Prostate gland (tissue), 2 donors: ENCODE measurements at regions of chr11 and their contacts with region 1.

Region 1: GRCh38 chr11:69642913-69643632 is 2.1 kb downstream of the CCND1 start:
- DNase-seq: peak; percentile 76
- H3K4me3 ChIP-seq: peak overlapping the region; percentile 87 to 99
- H3K27ac ChIP-seq: peak overlapping the region; percentile 91 to 93
- H3K4me1 ChIP-seq: peaks cover 38% of the 10 kb centered on the region
- H3K27me3 ChIP-seq: no peaks in the 10 kb centered on the region
- CTCF ChIP-seq: peak; percentile 96 to 98 (median 97)
- POLR2A ChIP-seq: peak; percentile 42

Region 2: GRCh38 chr11:68927280-68928135 is 715.6 kb before region 1 on chr11:
- intact Hi-C with region 1: loop called (anchors 10 kb)
- DNase-seq: peak; percentile 31
- H3K4me3 ChIP-seq: no peak overlapping the region
- H3K27ac ChIP-seq: peak overlapping the region; percentile 18 to 54
- H3K4me1 ChIP-seq: peaks cover 7% of the 10 kb centered on the region
- H3K27me3 ChIP-seq: no peaks in the 10 kb centered on the region
- CTCF ChIP-seq: no peak
- POLR2A ChIP-seq: no peak

Region 3: GRCh38 chr11:69101115-69101791 is 541.8 kb before region 1 on chr11:
- intact Hi-C with region 1: loop called (anchors 1 kb)
- DNase-seq: peak; percentile 87
- H3K4me3 ChIP-seq: no peak overlapping the region
- H3K27ac ChIP-seq: no peak overlapping the region
- H3K4me1 ChIP-seq: peaks cover 16% of the 10 kb centered on the region
- H3K27me3 ChIP-seq: no peaks in the 10 kb centered on the region
- CTCF ChIP-seq: peak; percentile 96 to 100 (median 99)
- POLR2A ChIP-seq: no peak

Region 4: DNA sequence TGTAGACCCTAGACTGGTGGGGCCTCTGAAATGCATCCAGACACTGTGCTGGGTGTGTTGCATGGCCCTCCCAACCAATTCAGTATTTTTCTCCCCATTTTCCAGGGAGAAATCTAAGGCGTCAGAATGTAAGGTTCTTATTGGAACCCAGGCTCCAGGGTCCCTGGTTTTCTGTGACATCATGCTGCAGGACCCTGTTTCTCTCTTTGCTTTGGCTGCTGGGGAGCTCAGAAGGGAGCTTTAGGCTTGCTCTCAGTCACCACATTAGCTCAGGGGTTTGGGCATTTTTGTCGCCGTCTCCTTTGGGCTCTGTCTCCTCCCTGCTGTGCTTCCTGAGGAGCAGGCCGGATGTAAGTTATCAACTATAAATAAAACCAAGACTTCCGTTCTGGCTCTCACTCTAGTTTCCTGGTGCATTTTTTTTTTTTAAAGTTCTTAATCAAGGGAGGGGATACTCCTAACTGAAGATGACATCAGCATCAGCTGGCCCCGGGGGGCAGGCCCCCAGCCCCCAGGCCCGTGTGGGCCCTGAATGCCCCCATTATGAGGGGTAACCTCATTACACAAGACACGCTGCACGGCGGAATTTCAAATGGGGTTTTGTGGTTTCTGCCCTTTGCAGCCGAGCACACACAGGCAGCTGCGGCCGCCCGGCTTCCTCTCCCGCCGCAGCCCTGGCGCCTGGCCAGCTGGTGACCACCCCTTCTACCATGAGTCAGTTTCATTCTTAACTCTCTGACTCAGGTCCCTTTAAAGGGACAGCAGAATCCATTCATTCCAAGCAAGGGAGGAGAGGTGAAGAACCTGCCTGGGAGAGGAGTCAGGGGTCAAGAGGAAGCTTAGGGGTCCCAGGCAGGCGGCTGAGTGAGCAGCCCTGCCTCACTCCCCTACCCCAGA is 345.9 kb before region 1 on chr11:
- intact Hi-C with region 1: loop called (anchors 2 kb)
- DNase-seq: peak; percentile 64
- H3K4me3 ChIP-seq: peak overlapping the region in 1 of 2 donors; percentile 8
- H3K27ac ChIP-seq: peak overlapping the region; percentile 13 to 30
- H3K4me1 ChIP-seq: no peaks in the 10 kb centered on the region
- H3K27me3 ChIP-seq: no peaks in the 10 kb centered on the region
- CTCF ChIP-seq: no peak
- POLR2A ChIP-seq: no peak

Region 5: GRCh38 chr11:69497221-69497787 is 145.8 kb before region 1 on chr11:
- intact Hi-C with region 1: loop called (anchors 10 kb)
- DNase-seq: peak; percentile 35
- H3K4me3 ChIP-seq: no peak overlapping the region
- H3K27ac ChIP-seq: peak overlapping the region; percentile 49 to 53
- H3K4me1 ChIP-seq: peaks cover 3% of the 10 kb centered on the region
- H3K27me3 ChIP-seq: no peaks in the 10 kb centered on the region
- CTCF ChIP-seq: no peak
- POLR2A ChIP-seq: no peak

Region 6: DNA sequence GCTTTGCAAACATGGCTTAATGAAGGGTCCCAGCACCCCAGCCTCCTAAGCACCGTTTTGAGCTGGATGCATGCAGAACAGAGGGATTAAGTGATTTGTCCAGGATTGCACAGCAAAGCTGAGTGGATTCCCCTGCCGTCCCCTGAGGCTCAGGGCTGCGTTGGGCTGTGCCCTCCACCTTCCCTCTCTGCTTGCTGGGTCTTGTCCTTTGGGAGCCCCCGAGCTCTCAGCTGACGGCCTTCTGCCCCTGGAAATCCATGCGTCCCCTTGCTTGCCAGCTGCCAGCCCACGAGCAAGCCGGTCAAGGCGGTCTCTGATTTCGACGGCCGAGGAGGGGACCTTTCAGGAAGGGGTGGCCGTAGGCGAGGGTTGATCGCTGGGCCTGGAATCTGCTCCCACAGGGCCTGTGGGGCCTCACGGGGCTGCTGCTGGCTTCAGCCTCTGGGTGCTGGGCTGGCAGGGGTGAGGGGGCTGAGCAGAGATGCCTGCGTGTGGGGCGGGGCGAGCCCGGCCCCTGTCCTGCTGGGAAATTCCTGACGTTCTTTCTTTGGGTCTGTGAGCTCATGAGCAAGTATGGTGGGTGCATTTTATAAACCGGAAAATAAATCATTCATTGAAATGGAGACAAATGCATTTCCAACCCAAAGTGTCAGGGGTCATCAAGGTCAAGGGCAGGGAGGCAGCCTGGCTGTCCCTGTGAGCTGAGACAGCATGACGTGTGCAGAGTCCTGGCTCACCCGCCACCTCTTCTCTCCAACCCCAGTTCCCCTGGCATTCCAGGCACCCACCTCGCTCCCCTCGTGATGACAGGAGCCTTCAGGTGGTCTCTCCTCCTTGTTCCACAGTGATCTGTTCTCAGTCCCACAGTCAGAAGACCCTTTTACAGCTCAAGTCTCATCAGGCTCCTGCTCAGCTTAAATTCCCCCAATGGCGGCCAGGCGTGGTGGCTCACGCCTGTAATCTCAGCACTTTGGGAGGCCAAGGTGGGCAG is 104.0 kb after region 1 on chr11:
- intact Hi-C with region 1: no loop called
- DNase-seq: no peak
- H3K4me3 ChIP-seq: no peak overlapping the region
- H3K27ac ChIP-seq: no peak overlapping the region
- H3K4me1 ChIP-seq: no peaks in the 10 kb centered on the region
- H3K27me3 ChIP-seq: no peaks in the 10 kb centered on the region
- CTCF ChIP-seq: no peak
- POLR2A ChIP-seq: no peak

Region 7: GRCh38 chr11:69791276-69792180 is 148.5 kb after region 1 on chr11:
- intact Hi-C with region 1: no loop called
- DNase-seq: no peak
- H3K4me3 ChIP-seq: no peak overlapping the region
- H3K27ac ChIP-seq: no peak overlapping the region
- H3K4me1 ChIP-seq: no peaks in the 10 kb centered on the region
- H3K27me3 ChIP-seq: no peaks in the 10 kb centered on the region
- CTCF ChIP-seq: no peak
- POLR2A ChIP-seq: no peak